CD4-positive, alpha-beta T cell (primary cell): ENCODE measurements at regions of chr19 and their contacts with region 1.

Region 1: DNA sequence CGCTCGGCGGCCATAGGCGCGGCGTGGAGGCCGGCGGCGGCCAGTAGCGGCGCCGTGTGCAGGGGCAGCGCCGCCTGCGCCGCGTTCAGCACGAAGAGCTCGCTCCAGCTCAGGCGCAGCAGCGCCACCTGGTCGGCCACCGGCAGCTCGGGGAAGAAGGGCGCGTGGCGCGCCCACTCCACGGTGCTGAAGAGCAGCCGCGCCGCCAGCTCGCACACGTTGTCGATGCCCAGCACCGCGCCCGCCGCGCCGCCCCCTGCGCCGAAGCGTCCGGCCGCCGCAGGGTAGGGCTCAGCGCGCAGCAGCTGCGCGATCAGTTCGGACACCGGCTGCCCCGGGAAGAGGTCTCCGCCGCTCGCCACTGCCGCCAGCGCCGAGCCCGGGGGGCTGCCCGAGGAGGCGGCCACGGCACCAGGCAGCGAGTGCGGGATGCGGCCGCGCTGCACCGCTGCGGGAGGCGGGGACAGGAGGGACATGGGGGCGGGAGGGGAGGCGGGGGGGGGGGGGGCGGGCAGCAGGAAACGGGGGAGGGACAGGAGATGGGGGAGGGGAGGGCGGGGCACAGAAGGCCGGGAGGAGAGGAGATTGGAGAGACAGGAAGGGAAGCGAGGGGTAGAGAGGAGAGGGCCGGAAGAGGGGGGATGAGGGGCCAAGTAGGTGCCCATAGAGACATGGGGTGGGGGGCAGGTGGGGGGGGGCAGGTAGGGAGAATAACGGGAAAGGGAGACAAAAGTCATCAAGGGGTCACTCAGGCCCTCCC is 9.8 kb downstream of the OCEL1 start:
- DNase-seq: peak; percentile 57 to 92 (median 73)
- ATAC-seq: peak; percentile 92
- H3K4me3 ChIP-seq: peak overlapping the region; percentile 87
- H3K4me3 Mint-ChIP-seq: peak overlapping the region; percentile 87
- H3K27ac ChIP-seq: no peak overlapping the region
- H3K27ac Mint-ChIP-seq: no peak overlapping the region
- H3K4me1 ChIP-seq: peaks cover 22% of the 10 kb centered on the region
- H3K4me1 Mint-ChIP-seq: peaks cover 6% of the 10 kb centered on the region
- H3K27me3 ChIP-seq: no peaks in the 10 kb centered on the region
- H3K27me3 Mint-ChIP-seq: no peaks in the 10 kb centered on the region
- CTCF ChIP-seq: peak; percentile 67

Region 2: DNA sequence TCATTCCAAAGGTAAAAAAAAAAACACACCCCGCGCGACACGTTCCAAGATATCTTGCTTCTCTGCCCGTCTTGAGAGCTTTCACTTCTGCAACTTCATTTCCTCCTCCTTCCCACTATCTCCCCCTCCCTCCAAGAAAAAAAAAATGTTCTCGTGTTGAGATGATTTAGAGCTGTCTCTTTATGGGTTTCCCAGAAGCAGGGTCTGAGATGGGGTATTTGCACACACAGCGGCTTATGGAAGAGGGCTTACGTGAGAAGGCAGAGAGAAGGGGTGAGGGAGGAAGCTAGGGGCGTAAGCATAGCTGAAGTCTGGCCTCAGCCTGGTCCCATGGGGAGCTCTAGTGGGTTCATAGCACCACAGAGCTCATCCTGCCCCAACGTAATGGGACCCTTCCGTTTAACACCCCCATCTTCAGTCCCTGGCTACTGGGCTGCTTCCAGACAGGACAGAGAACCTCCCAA is 51.9 kb before region 1 on chr19:
- CTCF ChIA-PET with region 1: interaction called, 13 read pairs
- POLR2A ChIA-PET with region 1: interaction called, 4 read pairs
- intact Hi-C with region 1: no loop called
- DNase-seq: peak in 6 of 14 experiments; percentile 7 to 63 (median 46)
- ATAC-seq: peak; percentile 57
- H3K4me3 ChIP-seq: peak overlapping the region; percentile 41
- H3K4me3 Mint-ChIP-seq: peak overlapping the region; percentile 83
- H3K27ac ChIP-seq: peak overlapping the region; percentile 46 to 82
- H3K27ac Mint-ChIP-seq: peak overlapping the region; percentile 89
- H3K4me1 ChIP-seq: peaks cover 35% of the 10 kb centered on the region
- H3K4me1 Mint-ChIP-seq: peaks cover 19% of the 10 kb centered on the region
- H3K27me3 ChIP-seq: no peaks in the 10 kb centered on the region
- H3K27me3 Mint-ChIP-seq: no peaks in the 10 kb centered on the region
- CTCF ChIP-seq: no peak

Region 3: DNA sequence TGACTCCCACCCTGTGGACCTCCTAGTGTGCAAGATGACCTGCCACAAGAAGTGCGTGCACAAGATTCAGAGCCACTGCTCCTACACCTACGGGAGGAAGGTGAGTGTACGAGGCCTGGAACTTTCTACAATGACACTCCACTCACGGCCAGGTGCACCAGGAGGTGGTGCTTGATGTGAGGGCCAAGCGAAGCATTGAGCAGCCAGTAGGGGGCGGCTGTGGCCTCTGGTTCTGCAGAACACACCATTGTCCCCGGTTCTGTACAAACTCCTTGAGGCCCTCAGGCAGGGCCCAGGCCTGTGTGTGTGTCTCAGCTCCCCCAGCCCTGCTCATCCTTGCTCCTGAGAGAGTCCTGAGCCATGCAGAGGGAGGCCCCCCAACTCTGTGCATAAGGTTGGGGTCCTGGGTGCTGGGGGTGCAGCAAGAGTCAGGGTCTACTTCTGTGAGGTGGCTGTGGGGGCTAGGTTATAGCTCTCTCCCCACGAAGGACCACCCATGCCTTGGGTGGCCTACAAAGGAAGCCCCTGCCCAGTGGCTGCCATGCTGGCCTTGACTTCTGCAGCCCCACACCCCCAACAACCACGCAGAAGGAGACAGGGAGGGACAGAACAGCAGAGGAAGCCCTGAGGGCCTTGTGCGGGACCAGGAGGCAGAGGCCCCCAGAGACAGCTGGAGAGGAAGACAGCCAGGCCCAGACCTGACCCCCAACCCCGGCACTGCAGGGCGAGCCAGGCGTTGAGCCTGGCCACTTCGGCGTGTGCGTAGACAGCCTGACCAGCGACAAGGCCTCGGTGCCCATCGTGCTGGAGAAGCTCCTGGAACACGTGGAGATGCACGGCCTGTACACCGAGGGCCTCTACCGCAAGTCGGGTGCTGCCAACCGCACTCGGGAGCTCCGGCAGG is 30.3 kb before region 1 on chr19:
- CTCF ChIA-PET with region 1: interaction called, 11 read pairs
- POLR2A ChIA-PET with region 1: interaction called, 4 read pairs
- intact Hi-C with region 1: loop called in 1 of 2 experiments (anchors 1 kb)
- DNase-seq: peak; percentile 56 to 81 (median 63)
- ATAC-seq: peak; percentile 82
- H3K4me3 ChIP-seq: no peak overlapping the region
- H3K4me3 Mint-ChIP-seq: no peak overlapping the region
- H3K27ac ChIP-seq: no peak overlapping the region
- H3K27ac Mint-ChIP-seq: no peak overlapping the region
- H3K4me1 ChIP-seq: no peaks in the 10 kb centered on the region
- H3K4me1 Mint-ChIP-seq: no peaks in the 10 kb centered on the region
- H3K27me3 ChIP-seq: no peaks in the 10 kb centered on the region
- H3K27me3 Mint-ChIP-seq: no peaks in the 10 kb centered on the region
- CTCF ChIP-seq: peak; percentile 68

Region 4: DNA sequence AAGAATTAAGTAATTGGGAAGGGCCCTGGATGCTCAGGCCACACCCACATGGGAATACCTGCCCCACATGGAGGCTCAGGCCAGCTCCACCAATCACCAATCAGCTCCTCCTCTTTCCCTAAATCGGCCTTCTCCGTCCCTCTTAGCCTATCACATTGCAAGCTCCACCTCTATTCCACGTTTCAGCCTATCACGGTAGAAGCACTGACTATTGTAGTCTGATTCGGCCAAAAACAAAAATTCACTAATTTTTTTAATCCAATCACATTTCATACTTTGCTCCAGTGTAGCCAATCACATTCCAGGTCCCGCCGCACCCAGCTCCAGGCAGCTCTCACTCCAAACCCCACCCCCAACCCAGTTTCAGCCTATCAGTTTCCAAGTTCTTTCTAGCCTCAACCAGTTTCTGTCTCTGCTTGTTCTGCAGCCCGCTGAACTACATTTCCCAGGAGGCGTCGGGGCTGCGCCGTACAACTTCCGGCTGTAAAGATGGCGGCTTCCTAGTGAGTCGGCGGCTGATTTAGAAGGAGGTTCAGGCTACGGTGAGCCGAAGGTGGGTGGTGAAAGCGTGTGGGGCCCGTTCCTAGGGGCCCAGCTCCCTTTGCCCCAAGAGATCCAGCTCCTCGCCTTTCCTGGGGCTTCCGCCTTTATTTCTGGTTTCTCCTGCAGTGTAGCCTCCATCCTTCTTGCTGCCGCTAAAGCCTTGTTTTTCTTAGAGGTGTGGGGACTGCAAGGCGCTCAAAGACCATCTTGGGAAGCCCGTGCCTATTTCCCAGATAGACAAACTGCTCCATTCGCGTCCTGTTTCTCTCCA is 31.4 kb after region 1 on chr19 and contains the start of gene BABAM1:
- CTCF ChIA-PET with region 1: interaction called, 5 read pairs
- POLR2A ChIA-PET with region 1: interaction called, 16 read pairs
- intact Hi-C with region 1: no loop called
- DNase-seq: peak; percentile 85 to 99 (median 92)
- ATAC-seq: peak; percentile 94
- H3K4me3 ChIP-seq: peak within 1 kb of the TSS; percentile 84
- H3K4me3 Mint-ChIP-seq: peak within 1 kb of the TSS; percentile 83
- H3K27ac ChIP-seq: peak within 1 kb of the TSS; percentile 47 to 63
- H3K27ac Mint-ChIP-seq: peak within 1 kb of the TSS; percentile 69
- H3K4me1 ChIP-seq: peaks cover 39% of the 10 kb centered on the region
- H3K4me1 Mint-ChIP-seq: peaks cover 15% of the 10 kb centered on the region
- H3K27me3 ChIP-seq: no peaks in the 10 kb centered on the region
- H3K27me3 Mint-ChIP-seq: no peaks in the 10 kb centered on the region
- CTCF ChIP-seq: no peak
- total RNA-seq, gene BABAM1: 56.2 to 63.5 TPM